Activated CD4-positive, alpha-beta memory T cell treated with anti-CD3 and anti-CD28 coated beads, Interleukin-2, amount 10 ng/mL, durations not matched to agents 7 days and 5 days (primary cell): ENCODE measurements at regions of chr1 and their contacts with region 1.

Region 1: GRCh38 chr1:101288491-101288944 is 51.7 kb downstream of the S1PR1 start:
- DNase-seq: peak; percentile 71
- H3K4me3 Mint-ChIP-seq: no peak overlapping the region
- H3K27ac Mint-ChIP-seq: no peak overlapping the region
- H3K4me1 Mint-ChIP-seq: peaks cover 85% of the 10 kb centered on the region
- H3K27me3 Mint-ChIP-seq: no peaks in the 10 kb centered on the region

Region 2: DNA sequence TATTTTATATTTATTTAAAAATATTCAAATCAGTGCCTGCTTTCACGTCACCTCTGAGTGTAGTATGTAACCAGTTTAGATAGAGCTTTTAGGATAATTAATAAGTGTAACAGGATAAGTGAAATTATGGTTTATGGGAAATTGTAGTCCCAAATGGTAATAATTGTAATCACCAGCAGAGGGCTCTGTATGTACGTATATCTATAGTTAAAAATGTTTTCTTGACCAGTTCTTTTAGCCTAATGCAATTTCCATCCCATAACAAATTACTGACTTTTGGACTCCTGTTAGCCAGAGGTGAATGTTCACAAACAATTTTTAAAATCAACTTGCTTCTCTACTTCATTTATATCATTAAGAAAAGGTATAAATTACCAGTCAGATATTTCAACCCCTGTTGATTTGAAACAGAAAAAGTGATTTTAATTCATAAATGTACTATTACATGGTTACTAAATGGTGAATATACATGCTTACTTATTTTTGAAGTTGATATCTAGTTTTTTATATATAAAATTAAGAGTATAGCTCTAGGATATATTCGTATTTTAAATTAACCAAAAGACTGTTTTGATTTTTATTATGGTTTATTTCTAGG is 367.3 kb before region 1 on chr1:
- CTCF ChIA-PET with region 1: interaction called, 70 read pairs
- POLR2A ChIA-PET with region 1: interaction called, 7 read pairs
- DNase-seq: no peak
- H3K4me3 Mint-ChIP-seq: no peak overlapping the region
- H3K27ac Mint-ChIP-seq: no peak overlapping the region
- H3K4me1 Mint-ChIP-seq: peaks cover 32% of the 10 kb centered on the region
- H3K27me3 Mint-ChIP-seq: no peaks in the 10 kb centered on the region

Region 3: DNA sequence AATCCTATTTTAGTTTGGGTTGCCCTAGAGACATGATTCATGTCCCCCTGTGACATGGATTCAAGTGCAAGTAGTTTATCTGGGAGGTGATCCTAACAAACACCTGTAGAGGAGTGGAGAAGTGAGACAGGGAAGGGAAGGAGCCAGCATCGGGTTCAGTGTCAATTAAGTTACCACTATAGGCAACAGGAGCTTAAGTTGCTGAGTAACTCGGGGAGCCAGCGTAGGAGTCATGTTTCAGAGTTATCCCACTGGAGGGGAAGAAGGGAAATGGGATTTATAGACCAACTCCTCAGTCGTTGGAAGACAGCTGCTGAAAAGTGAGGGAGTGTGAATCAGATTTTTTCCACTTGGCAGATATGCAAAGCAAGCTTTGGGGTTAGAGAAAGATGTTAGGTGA is 337.7 kb before region 1 on chr1:
- CTCF ChIA-PET with region 1: interaction called, 12 read pairs
- POLR2A ChIA-PET with region 1: interaction called, 5 read pairs
- DNase-seq: no peak
- H3K4me3 Mint-ChIP-seq: no peak overlapping the region
- H3K27ac Mint-ChIP-seq: no peak overlapping the region
- H3K4me1 Mint-ChIP-seq: peaks cover 69% of the 10 kb centered on the region
- H3K27me3 Mint-ChIP-seq: no peaks in the 10 kb centered on the region

Region 4: GRCh38 chr1:101247404-101248287 is 40.9 kb before region 1 on chr1:
- CTCF ChIA-PET with region 1: interaction called, 26 read pairs
- POLR2A ChIA-PET with region 1: interaction called, 391 read pairs
- DNase-seq: no peak
- H3K4me3 Mint-ChIP-seq: no peak overlapping the region
- H3K27ac Mint-ChIP-seq: no peak overlapping the region
- H3K4me1 Mint-ChIP-seq: peaks cover 32% of the 10 kb centered on the region
- H3K27me3 Mint-ChIP-seq: no peaks in the 10 kb centered on the region

Region 5: GRCh38 chr1:101262630-101263348 is 25.7 kb before region 1 on chr1:
- CTCF ChIA-PET with region 1: interaction called, 30 read pairs
- POLR2A ChIA-PET with region 1: interaction called, 18 read pairs
- DNase-seq: peak; percentile 39
- H3K4me3 Mint-ChIP-seq: peak overlapping the region; percentile 23
- H3K27ac Mint-ChIP-seq: peak overlapping the region; percentile 70
- H3K4me1 Mint-ChIP-seq: peaks cover 84% of the 10 kb centered on the region
- H3K27me3 Mint-ChIP-seq: no peaks in the 10 kb centered on the region